Activated T-helper 1 cell treated with anti-CD3 and anti-CD28 coated beads, Interleukin-12 subunit alpha, Interleukin-12 subunit beta, Interleukin-2, Interleukin-4 antibody, amounts not matched to agents 30 ng/mL and 10 ng/mL and 1 ng/mL, durations not matched to agents 14 hours and 24 hours and 36 hours (primary cell): ENCODE measurements at regions of chr6 and their contacts with region 1.

Region 1: GRCh38 chr6:6547110-6547879 is 41.2 kb upstream of the LY86 start:
- DNase-seq: peak; percentile 74
- H3K4me3 Mint-ChIP-seq: peak overlapping the region; percentile 56
- H3K27ac Mint-ChIP-seq: peak overlapping the region; percentile 40
- H3K4me1 Mint-ChIP-seq: peaks cover 18% of the 10 kb centered on the region
- H3K27me3 Mint-ChIP-seq: peaks cover 64% of the 10 kb centered on the region

Region 2: GRCh38 chr6:5471044-5471443 is 1076.3 kb before region 1 on chr6:
- intact Hi-C with region 1: loop called (anchors 2 kb)
- DNase-seq: peak; percentile 18
- H3K4me3 Mint-ChIP-seq: no peak overlapping the region
- H3K27ac Mint-ChIP-seq: no peak overlapping the region
- H3K4me1 Mint-ChIP-seq: no peaks in the 10 kb centered on the region
- H3K27me3 Mint-ChIP-seq: no peaks in the 10 kb centered on the region

Region 3: DNA sequence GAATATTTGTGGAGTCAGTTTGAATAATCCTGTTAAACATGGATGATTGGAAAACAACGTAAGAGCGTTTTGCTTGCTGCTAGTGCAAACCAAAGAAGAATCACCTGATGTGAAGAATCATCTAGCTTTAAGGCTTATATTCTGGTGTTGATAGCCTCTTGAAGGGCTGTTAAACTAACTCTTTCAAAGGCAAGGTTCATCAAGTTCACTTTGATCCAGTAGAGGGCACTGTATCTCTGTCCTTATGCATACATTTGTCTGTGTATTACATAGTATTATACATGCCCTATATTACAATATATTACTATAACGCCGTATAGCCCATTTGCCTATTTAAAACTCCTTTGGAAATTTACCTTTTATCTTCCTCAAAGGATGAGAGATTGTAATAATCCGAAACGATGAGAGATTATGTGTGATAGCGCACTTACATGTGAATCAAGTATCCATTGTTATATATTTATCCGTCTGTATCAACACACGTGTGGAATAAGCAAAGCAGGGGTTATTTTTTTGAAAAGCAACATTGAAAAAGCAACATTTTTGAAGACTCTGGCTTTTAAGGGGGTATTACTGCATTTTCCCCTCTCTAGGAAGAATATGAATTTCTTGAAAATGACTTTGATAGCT is 489.8 kb before region 1 on chr6:
- intact Hi-C with region 1: loop called (anchors 1 kb)
- DNase-seq: no peak
- H3K4me3 Mint-ChIP-seq: no peak overlapping the region
- H3K27ac Mint-ChIP-seq: no peak overlapping the region
- H3K4me1 Mint-ChIP-seq: no peaks in the 10 kb centered on the region
- H3K27me3 Mint-ChIP-seq: peaks cover 18% of the 10 kb centered on the region

Region 4: GRCh38 chr6:6256886-6257285 is 290.4 kb before region 1 on chr6:
- intact Hi-C with region 1: loop called (anchors 10 kb)
- DNase-seq: no peak
- H3K4me3 Mint-ChIP-seq: no peak overlapping the region
- H3K27ac Mint-ChIP-seq: no peak overlapping the region
- H3K4me1 Mint-ChIP-seq: no peaks in the 10 kb centered on the region
- H3K27me3 Mint-ChIP-seq: no peaks in the 10 kb centered on the region

Region 5: DNA sequence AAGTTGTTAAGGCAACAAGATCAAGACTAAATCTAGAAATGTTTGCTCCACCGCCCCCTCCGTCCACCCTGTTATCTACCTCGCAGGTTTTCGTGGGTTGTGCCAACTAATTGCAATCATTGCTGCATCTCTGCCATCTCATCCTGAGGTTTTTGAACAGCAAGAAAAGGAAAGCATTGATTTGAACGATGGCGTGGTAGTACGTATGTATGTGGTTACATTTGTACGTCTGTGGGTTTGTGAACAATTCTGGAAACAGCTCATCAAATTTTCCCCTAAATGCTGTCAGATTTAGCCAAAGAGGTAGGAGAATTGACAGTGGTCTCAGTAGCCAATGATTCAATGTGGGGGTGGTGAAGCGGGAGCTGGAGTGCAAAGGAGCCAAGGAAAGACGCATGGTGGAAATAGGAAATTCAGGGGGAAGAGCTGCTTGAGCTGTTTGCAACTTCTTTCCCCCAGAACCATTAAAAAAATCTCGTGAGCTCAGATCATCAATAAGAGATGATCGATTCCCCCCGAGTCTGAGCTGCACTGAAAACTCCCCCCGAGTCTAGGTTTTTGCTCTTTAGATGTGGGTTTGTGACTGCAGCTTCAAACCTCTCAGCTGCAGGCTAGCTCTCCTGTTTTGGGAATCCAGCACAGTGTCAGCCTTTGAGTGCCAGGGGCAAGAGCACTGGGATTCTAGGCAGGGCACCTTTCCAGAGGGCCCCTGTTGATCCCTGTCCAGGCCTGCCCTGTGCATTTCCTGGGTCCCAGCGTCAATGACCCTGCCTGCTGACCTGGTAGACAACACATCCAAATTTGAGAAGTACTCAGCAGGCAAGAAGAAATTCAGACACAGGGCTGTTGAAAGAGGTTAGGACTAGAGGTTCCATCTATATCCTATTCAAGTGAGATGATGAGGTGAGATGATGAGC is 31.3 kb before region 1 on chr6:
- intact Hi-C with region 1: loop called (anchors 2 kb)
- DNase-seq: peak; percentile 38
- H3K4me3 Mint-ChIP-seq: no peak overlapping the region
- H3K27ac Mint-ChIP-seq: peak overlapping the region; percentile 21
- H3K4me1 Mint-ChIP-seq: peaks cover 18% of the 10 kb centered on the region
- H3K27me3 Mint-ChIP-seq: peaks cover 80% of the 10 kb centered on the region